Activated T-helper 1 cell treated with anti-CD3 and anti-CD28 coated beads, Interleukin-12 subunit alpha, Interleukin-12 subunit beta, Interleukin-2, Interleukin-4 antibody, amounts not matched to agents 30 ng/mL and 10 ng/mL and 1 ng/mL, durations not matched to agents 14 hours and 24 hours and 36 hours (primary cell): ENCODE measurements at regions of chr19 and their contacts with region 1.

Region 1: DNA sequence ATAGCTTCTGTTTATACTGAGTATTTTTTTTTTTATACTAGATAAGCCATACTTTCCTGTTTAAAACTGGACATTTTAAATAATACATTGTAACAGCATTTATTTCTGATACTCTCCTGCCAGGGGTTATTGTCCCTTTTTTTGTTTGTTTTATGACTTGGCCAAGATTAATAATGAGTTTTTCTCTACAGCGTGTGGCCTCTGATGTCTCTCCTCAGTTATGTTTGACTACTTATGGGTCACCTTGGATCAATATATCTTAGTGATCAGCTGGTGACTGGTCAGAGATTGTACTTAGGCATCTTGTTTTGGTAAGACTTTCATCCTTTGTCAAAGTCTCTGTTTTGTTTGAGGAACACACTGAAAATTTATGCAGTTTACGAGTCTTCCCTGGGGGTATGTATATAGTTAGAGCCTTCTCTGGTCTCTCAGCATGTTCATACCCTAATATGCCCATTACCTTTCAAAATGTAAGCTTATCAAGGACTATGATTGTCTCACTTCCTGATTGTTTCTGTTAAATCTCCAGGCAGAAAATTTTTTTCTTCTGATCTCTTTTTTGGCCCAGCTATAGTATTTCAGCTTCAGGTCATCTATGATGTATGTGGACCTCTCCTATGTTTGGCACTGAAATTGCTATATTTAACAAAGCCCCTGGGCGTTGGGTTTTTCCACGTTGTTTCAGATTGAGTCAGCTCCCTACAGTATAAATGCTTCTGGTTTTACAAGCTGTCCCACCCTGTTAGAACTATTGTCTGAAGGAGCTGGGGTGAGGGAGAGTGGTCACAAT is 87.9 kb downstream of the URI1 start:
- DNase-seq: no peak
- H3K4me3 Mint-ChIP-seq: peak overlapping the region; percentile 9
- H3K27ac Mint-ChIP-seq: peak overlapping the region; percentile 37
- H3K4me1 Mint-ChIP-seq: peaks cover 32% of the 10 kb centered on the region
- H3K27me3 Mint-ChIP-seq: no peaks in the 10 kb centered on the region

Region 2: GRCh38 chr19:29927944-29928625 is 101.8 kb before region 1 on chr19:
- intact Hi-C with region 1: no loop called
- DNase-seq: no peak
- H3K4me3 Mint-ChIP-seq: no peak overlapping the region
- H3K27ac Mint-ChIP-seq: no peak overlapping the region
- H3K4me1 Mint-ChIP-seq: peaks cover 6% of the 10 kb centered on the region
- H3K27me3 Mint-ChIP-seq: peaks cover 7% of the 10 kb centered on the region

Region 3: DNA sequence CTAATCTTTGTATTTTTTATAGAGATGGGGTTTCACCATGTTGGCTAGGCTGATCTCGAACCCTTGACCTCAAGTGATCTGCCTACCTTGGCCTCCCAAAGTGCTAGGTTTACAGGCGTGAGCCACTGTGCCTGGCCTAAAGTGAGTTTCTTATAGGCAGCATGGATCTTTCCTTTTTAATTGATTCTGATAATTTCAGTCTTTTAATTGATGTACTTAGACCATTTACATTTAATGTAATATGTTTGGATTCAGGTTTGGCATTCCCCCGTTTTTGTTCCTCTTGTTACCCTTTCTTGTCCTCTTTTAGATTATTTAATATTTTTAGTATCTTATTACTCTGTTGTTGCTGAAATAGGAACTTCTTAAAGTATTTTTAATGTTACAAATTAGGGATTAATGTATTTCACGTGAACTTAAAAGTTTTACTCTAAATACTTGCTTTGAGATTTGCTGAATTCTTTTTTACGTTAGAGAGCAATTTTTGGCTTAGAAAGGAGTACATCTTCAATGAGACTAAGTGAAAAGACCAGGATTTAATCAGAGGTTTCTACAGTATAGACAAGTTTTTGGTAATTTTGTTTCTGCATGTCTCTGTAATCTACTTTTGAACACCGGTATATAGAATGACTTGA is 37.6 kb before region 1 on chr19:
- intact Hi-C with region 1: loop called (anchors 5 kb)
- DNase-seq: no peak
- H3K4me3 Mint-ChIP-seq: no peak overlapping the region
- H3K27ac Mint-ChIP-seq: no peak overlapping the region
- H3K4me1 Mint-ChIP-seq: peaks cover 14% of the 10 kb centered on the region
- H3K27me3 Mint-ChIP-seq: no peaks in the 10 kb centered on the region